HEK293T (cell line): ENCODE measurements at regions of chr14 and their contacts with region 1.

Region 1: GRCh38 chr14:24160850-24161804 is at the start of gene IRF9:
- DNase-seq: peak; percentile 92

Region 2: DNA sequence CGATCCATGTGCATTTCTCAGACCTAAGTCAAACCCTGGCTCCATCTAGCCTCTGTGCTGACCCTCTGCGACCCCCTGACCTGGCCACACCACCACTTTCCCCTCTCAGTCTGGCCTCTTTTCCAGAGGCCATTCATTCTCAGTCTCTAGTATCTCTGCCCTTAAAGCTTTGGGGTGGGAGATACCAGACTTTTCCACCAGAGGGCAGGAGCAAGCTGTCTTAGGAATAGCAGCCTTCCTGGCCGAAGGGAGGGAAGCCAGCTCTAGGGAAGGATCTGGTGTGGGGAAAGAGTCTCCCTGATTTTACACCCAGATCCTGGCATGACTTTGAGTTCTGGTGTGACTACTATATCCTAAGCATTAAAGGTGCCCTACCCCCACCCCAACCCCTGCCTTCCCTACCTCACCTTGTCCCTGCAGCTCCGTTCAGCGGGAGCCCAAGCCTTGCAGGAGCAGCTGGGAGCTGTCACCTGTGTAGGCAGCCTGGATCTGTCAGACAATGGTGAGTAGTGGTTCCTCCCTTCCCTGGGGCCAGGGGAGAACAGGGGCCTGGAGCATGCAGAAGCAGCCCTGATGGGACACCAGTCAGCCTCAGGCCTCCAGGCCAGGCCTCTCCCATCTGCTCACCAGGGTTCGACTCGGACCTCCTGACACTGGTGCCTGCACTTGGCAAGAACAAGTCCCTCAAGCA is 102.7 kb before region 1 on chr14:
- CTCF ChIA-PET with region 1: interaction called, 16 read pairs
- POLR2A ChIA-PET with region 1: interaction called, 7 read pairs
- DNase-seq: peak; percentile 85

Region 3: GRCh38 chr14:24135834-24136542 is 25.1 kb before region 1 on chr14 and contains the start of gene PSME1:
- CTCF ChIA-PET with region 1: interaction called, 11 read pairs
- POLR2A ChIA-PET with region 1: interaction called, 26 read pairs
- DNase-seq: peak; percentile 91

Region 4: DNA sequence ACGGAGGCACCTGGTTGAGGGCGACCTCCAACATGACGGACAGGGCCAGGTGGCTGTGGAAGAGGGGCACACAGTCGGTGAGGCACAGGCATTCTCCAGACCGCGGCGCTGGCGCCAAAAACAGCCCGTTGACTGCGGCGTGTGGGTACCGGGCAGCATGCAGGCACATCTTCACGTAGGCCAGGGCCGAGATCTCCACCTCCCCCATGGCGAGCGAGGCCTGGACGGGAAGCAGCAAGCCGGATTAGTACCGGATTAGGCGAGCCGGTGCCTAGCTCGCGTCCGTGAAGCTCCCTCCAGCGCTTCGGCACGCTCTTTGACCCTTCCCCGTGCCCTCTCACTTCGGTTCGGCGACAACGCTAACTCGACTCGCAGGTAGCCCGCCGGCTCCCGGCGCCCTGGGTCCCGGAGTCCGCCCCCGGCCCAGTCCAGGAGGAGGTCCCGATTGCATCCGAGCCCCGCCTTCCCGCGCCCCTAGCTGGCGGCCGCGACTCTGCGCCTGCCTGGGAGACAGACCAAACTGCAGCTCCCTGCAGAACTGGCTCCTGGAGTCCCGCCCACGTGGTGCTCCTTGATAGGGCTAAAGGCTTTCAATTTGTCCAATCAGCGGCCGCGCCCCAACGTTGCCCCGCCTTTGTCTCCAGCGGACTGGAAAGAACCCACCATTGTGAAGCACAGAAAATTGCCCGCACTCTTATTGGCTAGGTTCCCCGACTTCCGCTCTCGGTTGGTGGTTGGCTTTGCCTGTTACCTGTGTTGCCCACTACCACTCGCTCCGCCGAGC is 19.8 kb before region 1 on chr14 and contains the start of gene EMC9:
- CTCF ChIA-PET with region 1: interaction called, 19 read pairs
- POLR2A ChIA-PET with region 1: interaction called, 26 read pairs
- DNase-seq: peak; percentile 91

Region 5: GRCh38 chr14:24179961-24180796 is 19.1 kb after region 1 on chr14:
- CTCF ChIA-PET with region 1: interaction called, 10 read pairs
- POLR2A ChIA-PET with region 1: interaction called, 7 read pairs
- DNase-seq: no peak